ENCODE measurements at regions of chr22 and their contacts with region 1.

Region 1: GRCh38 chr22:38927033-38927781 is 30.2 kb upstream of the APOBEC3A start:
- H3K4me3 Mint-ChIP-seq: peak overlapping the region; percentile 47
- H3K27ac Mint-ChIP-seq: peak overlapping the region; percentile 5
- H3K4me1 Mint-ChIP-seq: peaks cover 12% of the 10 kb centered on the region
- H3K27me3 Mint-ChIP-seq: peaks cover 64% of the 10 kb centered on the region

Region 2: GRCh38 chr22:38755911-38756532 is 171.2 kb before region 1 on chr22 and contains the start of gene SUN2:
- intact Hi-C with region 1: no loop called
- H3K4me3 Mint-ChIP-seq: peak within 1 kb of the TSS; percentile 77
- H3K27ac Mint-ChIP-seq: peak within 1 kb of the TSS; percentile 90
- H3K4me1 Mint-ChIP-seq: peaks cover 74% of the 10 kb centered on the region
- H3K27me3 Mint-ChIP-seq: no peaks in the 10 kb centered on the region

Region 3: DNA sequence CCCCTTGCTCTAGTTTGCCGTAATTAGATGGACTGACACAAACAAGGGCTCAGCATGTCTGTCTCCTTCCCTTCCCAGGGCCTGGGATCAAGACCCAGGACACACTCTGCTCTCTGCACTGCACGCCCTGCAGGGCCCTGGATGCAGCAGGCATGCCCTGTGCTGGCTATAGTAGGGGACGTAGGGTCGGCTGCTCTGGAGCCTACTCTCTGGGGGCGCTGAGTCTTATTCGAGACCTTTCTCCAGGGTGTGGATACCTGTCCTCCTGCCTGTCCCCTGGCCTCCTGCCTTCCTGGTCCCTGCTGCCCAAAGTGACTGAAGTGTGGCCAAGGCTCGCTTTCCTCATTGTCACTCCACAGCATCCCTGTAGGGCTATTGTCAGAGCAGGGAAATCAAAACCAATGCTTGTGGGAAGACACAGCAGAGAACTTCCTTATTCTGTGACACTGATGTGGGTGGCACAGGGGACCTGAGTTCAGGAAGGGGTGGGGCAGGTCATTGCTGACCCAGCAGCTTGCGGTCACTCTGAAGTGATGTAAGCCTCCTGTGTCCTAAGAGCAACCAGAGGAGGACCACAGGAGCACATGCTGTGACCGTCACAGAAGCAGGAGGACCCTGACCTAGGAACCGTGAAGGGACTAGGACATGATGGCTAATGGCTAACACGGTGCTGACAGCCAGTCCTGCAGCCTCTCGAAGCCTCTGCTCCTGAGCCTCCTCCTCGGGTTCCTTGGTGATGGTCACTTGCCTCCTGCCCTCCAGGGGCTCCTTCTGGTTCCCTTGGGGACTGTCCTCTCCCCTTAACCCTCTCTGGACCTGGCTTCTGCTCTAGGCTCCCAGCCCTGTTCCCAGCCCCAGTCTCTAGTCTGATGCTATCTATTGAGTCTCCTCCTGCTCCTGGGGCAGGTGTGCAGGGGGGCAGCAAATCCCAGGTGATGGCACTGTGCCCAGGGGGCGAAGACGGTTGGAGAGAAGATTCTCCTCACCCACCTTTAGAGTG is 40.5 kb after region 1 on chr22:
- intact Hi-C with region 1: loop called (anchors 5 kb)
- H3K4me3 Mint-ChIP-seq: no peak overlapping the region
- H3K27ac Mint-ChIP-seq: peak overlapping the region; percentile 79
- H3K4me1 Mint-ChIP-seq: peaks cover 87% of the 10 kb centered on the region
- H3K27me3 Mint-ChIP-seq: peaks cover 39% of the 10 kb centered on the region

Region 4: DNA sequence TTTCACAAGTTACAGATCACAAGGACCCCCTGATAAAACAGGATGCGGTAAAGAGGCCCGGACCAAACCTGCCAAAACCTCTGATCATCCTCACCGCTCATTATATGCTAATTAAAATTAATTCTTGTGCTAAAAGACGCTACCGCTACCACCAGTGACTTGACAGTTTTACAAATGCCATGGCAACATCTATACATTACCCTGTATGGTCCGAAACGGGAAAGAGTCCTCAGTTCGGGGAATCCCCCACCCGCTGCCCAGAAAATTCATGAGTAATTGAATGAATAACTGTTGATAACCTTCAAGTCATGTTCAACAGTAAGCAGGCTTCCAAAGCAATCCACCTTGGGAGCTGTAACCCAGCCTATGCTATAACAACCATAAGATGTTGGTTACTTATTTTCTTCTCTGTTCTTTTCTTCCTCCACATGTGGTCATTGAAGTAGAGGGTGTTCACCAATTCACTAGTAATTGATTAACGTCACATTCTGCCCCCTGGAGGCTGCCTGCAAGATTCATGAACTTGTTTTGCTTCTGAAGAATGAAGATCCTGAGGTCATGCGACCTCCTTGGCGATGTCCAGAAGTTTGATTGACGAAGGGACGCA is 190.5 kb after region 1 on chr22:
- intact Hi-C with region 1: loop called (anchors 5 kb)
- H3K4me3 Mint-ChIP-seq: no peak overlapping the region
- H3K27ac Mint-ChIP-seq: peak overlapping the region; percentile 52
- H3K4me1 Mint-ChIP-seq: peaks cover 29% of the 10 kb centered on the region
- H3K27me3 Mint-ChIP-seq: peaks cover 20% of the 10 kb centered on the region

Region 5: GRCh38 chr22:39253435-39254070 is 326.3 kb after region 1 on chr22:
- intact Hi-C with region 1: no loop called
- H3K4me3 Mint-ChIP-seq: no peak overlapping the region
- H3K27ac Mint-ChIP-seq: peak overlapping the region; percentile 37
- H3K4me1 Mint-ChIP-seq: peaks cover 69% of the 10 kb centered on the region
- H3K27me3 Mint-ChIP-seq: peaks cover 79% of the 10 kb centered on the region